Caco-2 (cell line): ENCODE measurements at regions of chr14 and their contacts with region 1.

Region 1: DNA sequence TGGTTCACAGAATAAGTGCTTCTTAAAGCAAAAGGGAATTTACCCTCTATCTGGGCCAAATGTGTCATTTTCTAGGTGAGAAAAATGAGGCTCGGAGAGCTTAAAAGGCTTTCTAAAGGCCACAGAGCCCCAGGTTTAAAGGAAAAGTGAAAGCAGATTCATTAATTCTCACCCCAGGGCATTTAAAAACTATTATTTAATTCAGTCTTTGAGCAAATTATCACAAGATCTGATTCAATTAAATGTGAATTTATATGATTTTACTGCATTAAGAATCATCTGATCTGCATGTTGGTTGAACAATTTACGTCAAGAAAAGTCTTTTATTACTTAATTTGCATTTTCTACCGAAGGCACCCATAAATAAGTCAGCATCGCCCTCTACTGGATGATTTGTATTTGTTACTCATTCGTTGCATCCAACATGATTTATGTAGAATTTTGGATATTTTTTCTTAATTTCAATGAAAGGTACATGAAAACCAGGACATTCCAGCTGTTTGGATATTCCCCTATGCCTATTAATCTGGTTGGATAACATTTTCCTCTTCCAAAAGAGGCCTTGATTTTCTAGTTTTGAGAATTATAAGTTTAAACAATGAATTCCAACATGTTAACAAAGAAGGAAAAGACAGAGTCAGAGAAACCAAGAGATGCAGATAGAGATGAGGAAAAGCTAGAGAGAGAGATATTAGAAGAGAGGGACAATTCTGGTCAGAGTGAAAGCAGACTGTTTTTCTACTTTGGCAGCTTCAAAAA is 19.1 kb upstream of the DHRS7 start:
- DNase-seq: peak in 1 of 2 experiments; percentile 52
- H3K4me3 ChIP-seq: peak overlapping the region; percentile 13; the same call in 1 of the 2 replicates
- H3K4me3 Mint-ChIP-seq: peak overlapping the region; percentile 20
- H3K27ac Mint-ChIP-seq: no peak overlapping the region
- H3K4me1 ChIP-seq: no peaks in the 10 kb centered on the region
- H3K4me1 Mint-ChIP-seq: no peaks in the 10 kb centered on the region
- H3K27me3 ChIP-seq: no peaks in the 10 kb centered on the region
- H3K27me3 Mint-ChIP-seq: no peaks in the 10 kb centered on the region
- CTCF ChIP-seq: peak; percentile 52 to 69

Region 2: GRCh38 chr14:59507063-59507780 is 677.1 kb before region 1 on chr14:
- CTCF ChIA-PET with region 1: no interaction called
- POLR2A ChIA-PET with region 1: no interaction called
- intact Hi-C with region 1: loop called (anchors 10 kb)
- DNase-seq: peak; percentile 78 to 81
- H3K4me3 ChIP-seq: no peak overlapping the region
- H3K4me3 Mint-ChIP-seq: no peak overlapping the region
- H3K27ac Mint-ChIP-seq: no peak overlapping the region
- H3K4me1 ChIP-seq: no peaks in the 10 kb centered on the region; the same call in 1 of the 2 replicates
- H3K4me1 Mint-ChIP-seq: peaks cover 12% of the 10 kb centered on the region
- H3K27me3 ChIP-seq: no peaks in the 10 kb centered on the region
- H3K27me3 Mint-ChIP-seq: no peaks in the 10 kb centered on the region
- CTCF ChIP-seq: peak; percentile 75 to 98

Region 3: DNA sequence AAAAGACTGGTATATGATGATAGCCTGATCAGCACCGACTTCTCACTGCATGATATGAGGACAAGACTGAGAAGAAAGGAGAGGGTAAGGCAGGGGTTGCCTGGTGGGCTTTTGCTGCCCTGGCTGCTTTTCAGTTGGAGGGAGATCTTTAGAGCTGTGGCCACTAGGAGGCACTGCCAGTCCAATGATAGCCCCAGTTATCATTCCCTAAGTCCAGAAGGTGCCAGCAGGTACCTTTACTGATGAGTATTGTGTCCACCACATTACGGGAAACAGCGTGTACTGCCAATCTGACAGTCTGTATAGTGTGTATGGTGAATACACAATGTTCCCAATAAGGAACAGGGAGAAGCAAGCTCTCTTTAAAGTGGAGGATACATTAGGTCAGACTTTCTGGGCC is 551.9 kb before region 1 on chr14:
- CTCF ChIA-PET with region 1: no interaction called
- POLR2A ChIA-PET with region 1: no interaction called
- intact Hi-C with region 1: loop called (anchors 10 kb)
- DNase-seq: peak in 1 of 2 experiments; percentile 24
- H3K4me3 ChIP-seq: no peak overlapping the region
- H3K4me3 Mint-ChIP-seq: no peak overlapping the region
- H3K27ac Mint-ChIP-seq: no peak overlapping the region
- H3K4me1 ChIP-seq: 0 out of 2 replicates have a peak, but pooled peaks cover 3% of the 10 kb centered on the region
- H3K4me1 Mint-ChIP-seq: no peaks in the 10 kb centered on the region
- H3K27me3 ChIP-seq: no peaks in the 10 kb centered on the region
- H3K27me3 Mint-ChIP-seq: peaks cover 15% of the 10 kb centered on the region
- CTCF ChIP-seq: peak; percentile 25 to 39

Region 4: GRCh38 chr14:59964251-59965007 is 219.9 kb before region 1 on chr14:
- CTCF ChIA-PET with region 1: interaction called, 6 read pairs
- POLR2A ChIA-PET with region 1: interaction called, 5 read pairs
- intact Hi-C with region 1: loop called (anchors 1 kb)
- DNase-seq: no peak
- H3K4me3 ChIP-seq: peak overlapping the region; percentile 21; the same call in 1 of the 2 replicates
- H3K4me3 Mint-ChIP-seq: peak overlapping the region; percentile 78
- H3K27ac Mint-ChIP-seq: no peak overlapping the region
- H3K4me1 ChIP-seq: no peaks in the 10 kb centered on the region; the same call in 1 of the 2 replicates
- H3K4me1 Mint-ChIP-seq: peaks cover 7% of the 10 kb centered on the region
- H3K27me3 ChIP-seq: no peaks in the 10 kb centered on the region
- H3K27me3 Mint-ChIP-seq: no peaks in the 10 kb centered on the region
- CTCF ChIP-seq: no peak

Region 5: GRCh38 chr14:60008042-60008441 is 176.3 kb before region 1 on chr14:
- CTCF ChIA-PET with region 1: no interaction called
- POLR2A ChIA-PET with region 1: no interaction called
- intact Hi-C with region 1: no loop called
- DNase-seq: no peak
- H3K4me3 ChIP-seq: no peak overlapping the region
- H3K4me3 Mint-ChIP-seq: no peak overlapping the region
- H3K27ac Mint-ChIP-seq: no peak overlapping the region
- H3K4me1 ChIP-seq: peaks cover 16% of the 10 kb centered on the region
- H3K4me1 Mint-ChIP-seq: peaks cover 6% of the 10 kb centered on the region
- H3K27me3 ChIP-seq: no peaks in the 10 kb centered on the region
- H3K27me3 Mint-ChIP-seq: no peaks in the 10 kb centered on the region
- CTCF ChIP-seq: no peak

Region 6: GRCh38 chr14:60116181-60116580 is 68.1 kb before region 1 on chr14:
- CTCF ChIA-PET with region 1: no interaction called
- POLR2A ChIA-PET with region 1: no interaction called
- intact Hi-C with region 1: no loop called
- DNase-seq: no peak
- H3K4me3 ChIP-seq: no peak overlapping the region
- H3K4me3 Mint-ChIP-seq: no peak overlapping the region
- H3K27ac Mint-ChIP-seq: no peak overlapping the region
- H3K4me1 ChIP-seq: no peaks in the 10 kb centered on the region
- H3K4me1 Mint-ChIP-seq: no peaks in the 10 kb centered on the region
- H3K27me3 ChIP-seq: no peaks in the 10 kb centered on the region
- H3K27me3 Mint-ChIP-seq: no peaks in the 10 kb centered on the region
- CTCF ChIP-seq: no peak

Region 7: DNA sequence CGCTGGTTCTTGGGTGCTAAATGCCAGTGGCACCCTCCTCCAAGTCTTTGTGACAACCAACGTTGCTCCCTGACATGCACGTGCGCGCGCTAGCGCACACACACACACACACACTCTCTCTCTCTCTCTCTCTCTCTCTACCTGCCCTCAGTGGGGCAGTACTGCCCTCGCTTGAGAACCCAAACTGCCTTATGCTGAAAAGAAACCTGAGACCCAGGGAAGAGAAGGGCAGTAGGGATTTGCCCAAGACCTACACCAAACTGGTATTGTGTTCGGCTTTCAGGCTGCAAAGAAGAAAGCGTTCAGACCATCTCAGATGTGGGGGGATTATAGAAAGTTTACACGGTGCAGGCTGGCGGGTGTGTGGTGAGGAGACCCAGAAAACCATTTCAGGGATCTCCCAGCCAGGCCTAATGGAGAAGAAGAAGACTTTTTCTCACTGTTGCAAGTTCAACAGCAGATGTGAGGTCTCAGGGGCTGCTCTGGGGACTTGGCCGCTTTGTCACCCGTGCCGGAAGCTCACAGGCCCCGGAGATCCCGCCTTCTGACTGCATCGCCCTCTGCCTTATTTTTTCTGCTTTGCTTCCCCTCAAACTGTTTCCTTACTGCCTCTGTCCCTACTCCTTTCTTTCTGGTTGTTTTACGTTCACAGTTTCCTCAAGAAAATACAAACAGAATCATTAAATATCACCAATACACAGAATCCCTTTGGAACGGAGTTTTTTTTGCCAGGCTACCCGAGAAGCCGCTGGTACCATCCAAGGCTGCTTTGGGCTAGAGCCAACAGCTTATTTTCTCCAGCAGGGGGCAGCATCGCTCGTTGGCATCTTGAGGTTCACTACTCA is 147.1 kb after region 1 on chr14:
- CTCF ChIA-PET with region 1: no interaction called
- POLR2A ChIA-PET with region 1: no interaction called
- intact Hi-C with region 1: loop called (anchors 5 kb)
- DNase-seq: peak; percentile 73 to 78
- H3K4me3 ChIP-seq: peak overlapping the region; percentile 43
- H3K4me3 Mint-ChIP-seq: peak overlapping the region; percentile 88
- H3K27ac Mint-ChIP-seq: peak overlapping the region; percentile 68
- H3K4me1 ChIP-seq: no peaks in the 10 kb centered on the region
- H3K4me1 Mint-ChIP-seq: no peaks in the 10 kb centered on the region
- H3K27me3 ChIP-seq: no peaks in the 10 kb centered on the region
- H3K27me3 Mint-ChIP-seq: peaks cover 7% of the 10 kb centered on the region
- CTCF ChIP-seq: peak; percentile 74 to 84